ENCODE measurements at regions of chr2 and their contacts with region 1.

Region 1: DNA sequence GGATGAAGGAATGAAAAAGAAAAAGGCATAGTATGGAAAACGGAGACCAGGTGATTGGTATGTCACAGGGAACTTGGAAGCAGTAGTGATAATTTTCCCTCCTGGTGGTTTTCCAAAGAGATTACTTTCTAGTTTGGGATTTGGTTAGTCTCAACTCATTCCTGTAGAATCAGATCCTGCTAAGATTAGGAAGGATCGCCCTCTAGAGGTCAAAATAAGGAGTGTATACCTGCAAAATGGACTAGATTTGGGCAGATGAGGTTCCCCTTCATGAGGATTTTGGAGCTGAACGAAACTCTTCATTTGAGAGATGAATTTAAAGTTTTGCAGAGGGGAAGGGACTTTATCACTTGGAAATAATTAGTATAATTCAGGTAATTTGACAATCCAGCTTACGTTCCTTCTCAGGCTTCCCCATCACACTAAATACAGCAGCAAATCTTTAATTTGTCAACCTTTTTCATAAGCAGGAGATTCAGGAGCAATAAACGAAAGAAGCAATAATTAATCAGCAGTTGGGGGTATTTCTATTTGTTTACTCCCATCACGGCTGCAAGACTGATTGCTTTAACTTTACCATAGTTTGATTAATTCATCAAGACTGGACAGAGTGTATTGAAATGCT is 65.2 kb downstream of the CCDC195 start:
- DNase-seq: no peak
- H3K4me3 ChIP-seq: no peak overlapping the region
- H3K27ac ChIP-seq: no peak overlapping the region
- H3K4me1 ChIP-seq: no peaks in the 10 kb centered on the region
- H3K27me3 ChIP-seq: no peaks in the 10 kb centered on the region
- CTCF ChIP-seq: peak in 2 of 3 experiments; percentile 62 to 77; a peak in 2 of 4 replicates
- EP300 ChIP-seq: no peak
- POLR2A ChIP-seq: no peak
- RAD21 ChIP-seq: peak; percentile 86

Region 2: GRCh38 chr2:224357098-224357901 is 293.6 kb before region 1 on chr2:
- CTCF ChIA-PET with region 1: interaction called, 24 read pairs
- POLR2A ChIA-PET with region 1: no interaction called
- DNase-seq: peak in 1 of 2 experiments; percentile 76
- H3K4me3 ChIP-seq: no peak overlapping the region
- H3K27ac ChIP-seq: no peak overlapping the region
- H3K4me1 ChIP-seq: no peaks in the 10 kb centered on the region
- H3K27me3 ChIP-seq: no peaks in the 10 kb centered on the region
- CTCF ChIP-seq: peak in 2 of 3 experiments; percentile 74 to 78; a peak in 3 of 4 replicates
- EP300 ChIP-seq: no peak
- POLR2A ChIP-seq: no peak
- RAD21 ChIP-seq: peak; percentile 89 to 91

Region 3: GRCh38 chr2:224449212-224450147 is 201.4 kb before region 1 on chr2:
- CTCF ChIA-PET with region 1: interaction called, 11 read pairs
- POLR2A ChIA-PET with region 1: no interaction called
- DNase-seq: no peak
- H3K4me3 ChIP-seq: no peak overlapping the region
- H3K27ac ChIP-seq: no peak overlapping the region
- H3K4me1 ChIP-seq: no peaks in the 10 kb centered on the region
- H3K27me3 ChIP-seq: no peaks in the 10 kb centered on the region
- CTCF ChIP-seq: peak in 2 of 3 experiments; percentile 46 to 66; a peak in 3 of 4 replicates
- EP300 ChIP-seq: no peak
- POLR2A ChIP-seq: no peak
- RAD21 ChIP-seq: peak; percentile 53 to 65

Region 4: DNA sequence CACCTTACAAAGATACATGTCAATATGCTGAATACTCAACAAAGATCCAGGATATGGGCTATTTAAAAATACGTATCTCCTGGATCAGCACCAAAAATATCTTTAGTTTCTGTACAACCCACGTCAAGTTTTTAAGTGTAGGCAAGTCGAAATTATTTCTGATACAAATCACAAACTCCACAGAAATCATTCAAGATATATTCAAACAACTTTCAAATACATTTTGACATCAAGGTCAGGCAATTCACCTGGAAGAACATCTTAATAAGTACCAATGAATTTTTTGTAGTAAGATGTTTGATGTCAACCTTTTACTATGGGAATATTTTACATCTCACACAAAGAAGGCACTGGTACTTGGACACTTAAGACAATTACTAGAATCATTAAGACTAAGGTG is 151.9 kb before region 1 on chr2:
- CTCF ChIA-PET with region 1: no interaction called
- POLR2A ChIA-PET with region 1: no interaction called
- DNase-seq: no peak
- H3K4me3 ChIP-seq: no peak overlapping the region
- H3K27ac ChIP-seq: no peak overlapping the region
- H3K4me1 ChIP-seq: no peaks in the 10 kb centered on the region
- H3K27me3 ChIP-seq: no peaks in the 10 kb centered on the region
- CTCF ChIP-seq: no peak
- EP300 ChIP-seq: no peak
- POLR2A ChIP-seq: no peak
- RAD21 ChIP-seq: no peak

Region 5: DNA sequence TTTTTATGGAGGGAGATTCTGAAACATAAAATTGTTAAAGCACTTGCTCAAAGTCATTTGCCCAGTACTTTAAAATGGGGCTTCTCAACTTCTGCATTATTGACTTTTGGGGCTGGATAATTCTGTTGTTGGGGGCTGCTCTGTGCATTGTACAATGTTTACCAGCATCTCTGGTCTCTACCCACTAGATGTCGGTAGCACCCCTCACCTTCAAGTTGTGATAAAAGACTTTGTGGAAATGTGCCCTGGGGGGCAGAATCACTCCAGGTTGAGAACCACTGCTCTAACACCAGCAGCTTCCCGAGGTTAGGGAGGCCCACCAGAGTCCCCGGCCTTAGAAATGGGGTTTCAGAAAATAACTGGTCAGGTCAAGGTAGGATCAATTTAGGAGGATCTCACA is 39.0 kb before region 1 on chr2:
- CTCF ChIA-PET with region 1: interaction called, 11 read pairs
- POLR2A ChIA-PET with region 1: no interaction called
- DNase-seq: no peak
- H3K4me3 ChIP-seq: no peak overlapping the region
- H3K27ac ChIP-seq: no peak overlapping the region
- H3K4me1 ChIP-seq: no peaks in the 10 kb centered on the region
- H3K27me3 ChIP-seq: no peaks in the 10 kb centered on the region
- CTCF ChIP-seq: peak in 2 of 3 experiments; percentile 36 to 62; a peak in 3 of 4 replicates
- EP300 ChIP-seq: no peak
- POLR2A ChIP-seq: no peak
- RAD21 ChIP-seq: peak; percentile 54 to 63; a peak in 3 of 4 replicates

Region 6: GRCh38 chr2:224638301-224638823 is 12.6 kb before region 1 on chr2:
- CTCF ChIA-PET with region 1: interaction called, 15 read pairs
- POLR2A ChIA-PET with region 1: no interaction called
- DNase-seq: no peak
- H3K4me3 ChIP-seq: no peak overlapping the region
- H3K27ac ChIP-seq: no peak overlapping the region
- H3K4me1 ChIP-seq: no peaks in the 10 kb centered on the region
- H3K27me3 ChIP-seq: no peaks in the 10 kb centered on the region
- CTCF ChIP-seq: no peak
- EP300 ChIP-seq: no peak
- POLR2A ChIP-seq: no peak
- RAD21 ChIP-seq: no peak

Region 7: DNA sequence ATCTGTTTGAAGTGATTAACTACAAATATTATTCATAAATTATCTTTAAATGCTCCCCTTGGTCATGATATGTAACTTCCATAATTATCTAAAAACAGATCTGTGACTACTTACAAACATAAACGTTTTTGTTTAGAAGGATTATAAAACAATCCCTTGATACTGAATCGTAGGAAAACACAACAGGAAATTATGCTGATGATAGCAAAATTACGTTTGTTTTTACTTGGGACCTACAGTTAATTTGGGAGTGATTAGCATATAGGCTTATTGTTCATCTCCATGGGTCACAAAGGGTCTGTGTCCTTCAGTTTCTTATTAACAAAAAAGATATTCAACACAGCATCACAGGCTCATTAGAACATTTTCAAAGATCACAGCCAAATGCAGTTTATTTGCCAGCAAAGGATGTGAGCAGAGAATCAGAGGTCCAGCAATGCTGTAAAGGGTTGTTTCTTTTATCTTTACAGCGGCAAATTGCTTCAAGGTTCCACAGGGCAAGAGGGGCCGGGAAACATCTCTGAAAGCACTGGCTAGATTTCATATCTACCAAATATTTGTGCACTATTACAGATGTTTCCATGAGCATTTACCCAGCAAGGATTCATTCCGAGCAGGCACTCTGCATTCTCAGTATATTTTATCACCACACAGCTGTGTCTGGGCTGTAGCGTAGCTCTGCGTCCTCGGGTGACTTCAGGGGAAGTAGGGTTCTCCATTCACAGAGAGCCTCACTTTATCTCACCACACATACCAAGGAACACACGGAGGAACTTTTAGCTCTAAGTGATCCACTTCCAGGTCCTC is 61.1 kb after region 1 on chr2:
- CTCF ChIA-PET with region 1: no interaction called
- POLR2A ChIA-PET with region 1: no interaction called
- DNase-seq: no peak
- H3K4me3 ChIP-seq: no peak overlapping the region
- H3K27ac ChIP-seq: no peak overlapping the region
- H3K4me1 ChIP-seq: no peaks in the 10 kb centered on the region
- H3K27me3 ChIP-seq: no peaks in the 10 kb centered on the region
- CTCF ChIP-seq: no peak
- EP300 ChIP-seq: no peak
- POLR2A ChIP-seq: no peak
- RAD21 ChIP-seq: no peak

Measured in H1 (cell line).